ENCODE measurements at regions of chr10 and their contacts with region 1.

Region 1: DNA sequence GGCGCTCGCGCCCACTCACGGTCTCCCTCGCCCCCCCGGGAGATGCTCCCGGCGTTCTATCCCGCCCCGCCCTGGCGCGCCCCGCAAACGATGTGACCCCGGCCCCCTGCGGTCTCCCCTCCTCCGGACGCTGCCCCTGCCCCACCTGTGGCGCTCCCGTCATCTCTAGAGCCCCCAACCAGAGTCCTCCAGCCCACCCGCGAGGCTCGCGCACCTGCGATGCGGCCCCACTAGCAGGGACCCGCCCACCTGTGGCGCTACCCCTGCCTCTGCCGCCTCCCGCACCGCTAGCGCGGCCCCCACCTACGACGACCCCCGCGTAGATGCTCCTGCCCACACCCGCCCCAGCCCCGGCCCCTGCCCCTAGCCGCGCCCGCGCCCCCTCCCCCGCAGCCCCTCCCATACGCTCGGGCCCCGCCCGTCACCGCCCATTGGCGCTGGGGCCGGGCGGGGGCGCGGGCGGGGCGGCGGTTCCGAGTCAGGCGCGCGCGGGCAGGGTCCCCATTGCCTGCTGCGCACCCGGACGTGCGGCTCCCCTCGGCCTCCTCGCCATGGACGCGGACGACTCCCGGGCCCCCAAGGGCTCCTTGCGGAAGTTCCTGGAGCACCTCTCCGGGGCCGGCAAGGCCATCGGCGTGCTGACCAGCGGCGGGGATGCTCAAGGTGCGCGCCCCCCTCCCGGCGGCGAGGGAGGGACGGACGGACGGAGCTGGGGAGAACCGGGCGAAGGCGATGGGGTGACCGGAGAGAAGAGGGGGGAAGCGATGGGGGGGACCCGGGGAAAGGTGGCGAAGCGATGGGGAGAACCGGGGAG is at the start of gene PFKP:
- DNase-seq: peak; percentile 66
- H3K4me3 ChIP-seq: peak within 1 kb of the TSS; percentile 95
- H3K27ac ChIP-seq: peak within 1 kb of the TSS; percentile 81
- H3K4me1 ChIP-seq: peaks cover 6% of the 10 kb centered on the region
- H3K27me3 ChIP-seq: no peaks in the 10 kb centered on the region
- CTCF ChIP-seq: no peak
- total RNA-seq, gene PFKP: 206 and 232 TPM in 2 replicates

Region 2: GRCh38 chr10:3090914-3091787 is 23.9 kb after region 1 on chr10:
- CTCF ChIA-PET with region 1: interaction called, 13 read pairs
- POLR2A ChIA-PET with region 1: interaction called, 12 read pairs
- intact Hi-C with region 1: no loop called
- DNase-seq: peak; percentile 34
- H3K4me3 ChIP-seq: no peak overlapping the region
- H3K27ac ChIP-seq: no peak overlapping the region
- H3K4me1 ChIP-seq: peaks cover 29% of the 10 kb centered on the region
- H3K27me3 ChIP-seq: no peaks in the 10 kb centered on the region
- CTCF ChIP-seq: no peak